ENCODE measurements at regions of chr6 and their contacts with region 1.

Region 1: GRCh38 chr6:26285143-26286134 is 79.6 kb upstream of the BTN3A2 start:
- DNase-seq: peak; percentile 95
- H3K4me3 Mint-ChIP-seq: peak overlapping the region; percentile 88
- H3K27ac Mint-ChIP-seq: peak overlapping the region; percentile 95
- H3K4me1 Mint-ChIP-seq: peaks cover 33% of the 10 kb centered on the region
- H3K27me3 Mint-ChIP-seq: peaks cover 2% of the 10 kb centered on the region

Region 2: DNA sequence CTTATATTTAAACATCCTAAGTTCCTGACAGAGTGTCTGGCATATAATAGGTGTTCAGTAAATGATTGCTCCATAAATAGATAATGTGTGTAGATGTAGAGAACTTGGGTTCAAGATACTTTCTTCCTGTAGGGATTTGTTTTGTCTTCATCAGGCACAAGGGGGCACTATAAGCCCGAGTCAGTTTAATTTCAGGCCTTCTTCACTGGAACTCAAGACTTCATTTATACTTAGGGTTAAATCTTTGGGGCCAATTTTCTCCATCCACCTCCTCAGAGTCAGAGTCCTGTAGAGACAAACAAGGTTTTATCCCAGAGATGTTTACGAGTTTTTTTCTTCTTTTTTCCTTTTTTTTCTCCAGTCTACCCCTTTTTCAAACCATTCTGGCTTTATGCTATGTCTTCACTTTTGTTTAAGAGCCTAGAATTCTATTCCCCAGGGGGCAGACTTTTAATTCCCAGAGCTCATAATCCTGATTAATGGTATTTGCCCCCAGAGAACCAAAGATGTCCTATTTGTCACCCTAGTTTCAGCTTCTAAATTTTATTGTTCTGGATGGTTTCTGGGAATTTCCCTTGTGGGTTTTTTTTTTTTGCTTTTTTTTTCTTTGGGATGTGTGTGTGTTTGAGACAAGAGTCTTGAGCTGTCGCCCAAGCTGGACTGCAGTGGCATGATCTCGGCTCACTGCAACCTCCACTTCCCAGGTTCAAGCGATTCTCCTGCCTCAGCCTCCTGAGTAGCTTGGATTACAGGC is 109.8 kb before region 1 on chr6:
- intact Hi-C with region 1: loop called (anchors 10 kb)
- DNase-seq: peak; percentile 52
- H3K4me3 Mint-ChIP-seq: peak overlapping the region; percentile 56
- H3K27ac Mint-ChIP-seq: peak overlapping the region; percentile 63
- H3K4me1 Mint-ChIP-seq: peaks cover 45% of the 10 kb centered on the region
- H3K27me3 Mint-ChIP-seq: no peaks in the 10 kb centered on the region

Region 3: GRCh38 chr6:26240154-26241032 is 45.0 kb before region 1 on chr6:
- intact Hi-C with region 1: loop called (anchors 2 kb)
- DNase-seq: peak; percentile 81
- H3K4me3 Mint-ChIP-seq: peak overlapping the region; percentile 81
- H3K27ac Mint-ChIP-seq: peak overlapping the region; percentile 96
- H3K4me1 Mint-ChIP-seq: peaks cover 37% of the 10 kb centered on the region
- H3K27me3 Mint-ChIP-seq: no peaks in the 10 kb centered on the region

Region 4: DNA sequence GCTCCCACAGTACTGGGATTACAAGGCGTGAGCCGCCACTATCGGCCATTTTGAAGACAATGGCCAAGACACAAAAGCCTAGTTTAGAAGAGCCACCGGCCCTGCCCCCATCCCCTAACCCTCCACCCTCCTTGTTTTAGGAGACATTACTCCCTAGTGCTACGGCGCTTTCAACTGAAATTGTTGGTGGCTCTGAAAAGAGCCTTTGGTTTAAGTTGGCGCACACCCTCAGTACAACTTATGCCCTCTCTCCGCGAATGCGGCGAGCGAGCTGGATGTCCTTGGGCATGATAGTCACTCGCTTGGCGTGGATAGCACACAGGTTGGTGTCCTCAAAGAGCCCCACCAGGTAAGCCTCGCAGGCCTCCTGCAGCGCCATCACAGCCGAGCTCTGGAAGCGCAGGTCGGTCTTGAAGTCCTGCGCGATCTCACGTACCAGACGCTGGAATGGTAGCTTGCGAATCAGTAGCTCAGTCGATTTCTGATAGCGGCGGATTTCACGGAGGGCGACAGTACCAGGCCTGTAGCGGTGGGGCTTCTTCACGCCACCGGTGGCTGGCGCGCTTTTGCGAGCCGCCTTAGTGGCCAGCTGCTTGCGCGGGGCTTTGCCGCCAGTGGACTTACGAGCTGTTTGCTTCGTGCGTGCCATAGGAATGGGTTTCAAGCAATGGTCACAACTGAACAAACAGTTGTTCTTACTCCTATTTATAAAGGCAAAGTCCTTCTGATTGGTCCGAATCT is 35.3 kb before region 1 on chr6:
- intact Hi-C with region 1: loop called (anchors 1 kb)
- DNase-seq: peak; percentile 74
- H3K4me3 Mint-ChIP-seq: peak overlapping the region; percentile 92
- H3K27ac Mint-ChIP-seq: peak overlapping the region; percentile 98
- H3K4me1 Mint-ChIP-seq: peaks cover 46% of the 10 kb centered on the region
- H3K27me3 Mint-ChIP-seq: no peaks in the 10 kb centered on the region

Region 5: DNA sequence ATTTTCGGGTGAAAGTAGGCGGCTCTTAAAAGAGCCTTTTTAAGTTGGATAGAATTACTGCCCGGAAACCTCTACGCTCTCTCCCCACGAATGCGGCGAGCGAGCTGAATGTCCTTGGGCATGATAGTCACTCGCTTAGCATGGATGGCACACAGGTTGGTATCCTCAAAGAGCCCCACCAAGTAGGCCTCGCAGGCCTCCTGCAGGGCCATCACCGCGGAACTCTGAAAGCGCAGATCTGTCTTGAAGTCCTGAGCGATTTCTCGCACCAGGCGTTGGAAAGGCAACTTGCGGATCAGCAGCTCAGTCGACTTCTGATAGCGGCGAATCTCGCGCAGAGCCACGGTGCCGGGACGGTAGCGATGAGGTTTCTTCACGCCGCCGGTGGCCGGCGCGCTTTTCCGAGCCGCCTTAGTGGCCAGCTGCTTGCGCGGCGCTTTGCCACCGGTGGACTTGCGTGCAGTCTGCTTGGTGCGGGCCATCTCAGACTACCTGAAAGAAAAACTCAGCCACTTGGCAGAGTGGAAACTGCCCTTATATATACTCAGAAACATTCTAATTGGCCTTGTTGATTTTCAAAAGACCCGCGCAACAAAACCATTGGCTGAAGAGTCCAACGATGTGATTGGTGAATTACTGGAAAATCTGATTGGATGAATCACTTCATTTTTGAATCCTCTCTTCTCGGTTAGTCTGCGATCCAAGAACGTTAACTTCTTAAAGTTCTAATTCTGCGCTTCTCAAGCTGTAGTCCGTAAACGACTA is 14.4 kb before region 1 on chr6:
- intact Hi-C with region 1: loop called (anchors 1 kb)
- DNase-seq: peak; percentile 79
- H3K4me3 Mint-ChIP-seq: no peak overlapping the region
- H3K27ac Mint-ChIP-seq: no peak overlapping the region
- H3K4me1 Mint-ChIP-seq: peaks cover 37% of the 10 kb centered on the region
- H3K27me3 Mint-ChIP-seq: no peaks in the 10 kb centered on the region

Region 6: GRCh38 chr6:26312501-26313390 is 27.3 kb after region 1 on chr6:
- intact Hi-C with region 1: loop called (anchors 1 kb)
- DNase-seq: peak; percentile 79
- H3K4me3 Mint-ChIP-seq: peak overlapping the region; percentile 85
- H3K27ac Mint-ChIP-seq: peak overlapping the region; percentile 82
- H3K4me1 Mint-ChIP-seq: peaks cover 50% of the 10 kb centered on the region
- H3K27me3 Mint-ChIP-seq: no peaks in the 10 kb centered on the region